Panc1 (cell line): ENCODE measurements at regions of chr5 and their contacts with region 1.

Region 1: GRCh38 chr5:138605254-138605972 is 30.2 kb upstream of the HSPA9 start:
- DNase-seq: no peak
- ATAC-seq: no peak
- H3K4me3 ChIP-seq: no peak overlapping the region
- H3K27ac ChIP-seq: no peak overlapping the region
- H3K4me1 ChIP-seq: no peaks in the 10 kb centered on the region
- H3K27me3 ChIP-seq: no peaks in the 10 kb centered on the region
- CTCF ChIP-seq: no peak

Region 2: GRCh38 chr5:138686668-138687067 is 81.3 kb after region 1 on chr5:
- CTCF ChIA-PET with region 1: no interaction called
- POLR2A ChIA-PET with region 1: no interaction called
- in situ Hi-C with region 1: no loop called
- intact Hi-C with region 1: no loop called
- DNase-seq: no peak
- ATAC-seq: no peak
- H3K4me3 ChIP-seq: no peak overlapping the region
- H3K27ac ChIP-seq: no peak overlapping the region
- H3K4me1 ChIP-seq: no peaks in the 10 kb centered on the region
- H3K27me3 ChIP-seq: no peaks in the 10 kb centered on the region
- CTCF ChIP-seq: no peak

Region 3: GRCh38 chr5:138824924-138825863 is 219.8 kb after region 1 on chr5:
- CTCF ChIA-PET with region 1: interaction called, 14 read pairs
- POLR2A ChIA-PET with region 1: no interaction called
- in situ Hi-C with region 1: no loop called
- intact Hi-C with region 1: no loop called
- DNase-seq: no peak
- ATAC-seq: peak; percentile 63; the same call in 1 of the 2 replicates
- H3K4me3 ChIP-seq: no peak overlapping the region
- H3K27ac ChIP-seq: no peak overlapping the region
- H3K4me1 ChIP-seq: no peaks in the 10 kb centered on the region
- H3K27me3 ChIP-seq: no peaks in the 10 kb centered on the region
- CTCF ChIP-seq: peak; percentile 73; the same call in 1 of the 2 replicates

Region 4: GRCh38 chr5:139293504-139294373 is 688.3 kb after region 1 on chr5 and contains the start of gene MATR3:
- CTCF ChIA-PET with region 1: interaction called, 10 read pairs
- POLR2A ChIA-PET with region 1: no interaction called
- in situ Hi-C with region 1: no loop called
- intact Hi-C with region 1: no loop called
- DNase-seq: peak; percentile 84
- ATAC-seq: peak; percentile 91
- H3K4me3 ChIP-seq: peak within 1 kb of the TSS; percentile 78 to 90
- H3K27ac ChIP-seq: peak within 1 kb of the TSS; percentile 94
- H3K4me1 ChIP-seq: peaks cover 31% of the 10 kb centered on the region
- H3K27me3 ChIP-seq: no peaks in the 10 kb centered on the region
- CTCF ChIP-seq: no peak
- total RNA-seq, gene MATR3: 194 TPM